Posterior vena cava (tissue), 2 donors: ENCODE measurements at regions of chr2 and their contacts with region 1.

Region 1: GRCh38 chr2:3913166-3913565 is 209.8 kb downstream of the DCDC2C start:
- DNase-seq: no peak

Region 2: DNA sequence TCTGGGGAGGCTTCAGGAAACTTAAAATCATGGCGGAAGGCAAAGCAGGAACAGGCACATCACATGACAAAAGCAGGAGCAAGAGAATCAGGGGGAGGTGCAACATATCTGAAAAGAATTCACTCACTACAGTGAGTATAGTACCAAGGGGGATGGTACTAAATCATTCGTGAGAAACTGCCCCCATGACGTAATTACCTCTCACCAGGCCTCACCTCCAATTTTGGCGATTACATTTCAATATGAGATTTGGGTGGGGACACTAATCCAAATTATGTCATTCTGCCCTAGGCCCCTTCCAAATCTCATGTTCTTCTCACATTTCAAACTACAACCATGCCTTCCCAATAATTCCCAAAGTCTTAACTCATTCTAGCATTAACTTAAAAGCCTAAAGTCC is 1038.2 kb after region 1 on chr2:
- intact Hi-C with region 1: loop called in 1 of 2 experiments (anchors 5 kb)
- DNase-seq: no peak